AG04449 (cell line): ENCODE measurements at regions of chr3 and their contacts with region 1.

Region 1: DNA sequence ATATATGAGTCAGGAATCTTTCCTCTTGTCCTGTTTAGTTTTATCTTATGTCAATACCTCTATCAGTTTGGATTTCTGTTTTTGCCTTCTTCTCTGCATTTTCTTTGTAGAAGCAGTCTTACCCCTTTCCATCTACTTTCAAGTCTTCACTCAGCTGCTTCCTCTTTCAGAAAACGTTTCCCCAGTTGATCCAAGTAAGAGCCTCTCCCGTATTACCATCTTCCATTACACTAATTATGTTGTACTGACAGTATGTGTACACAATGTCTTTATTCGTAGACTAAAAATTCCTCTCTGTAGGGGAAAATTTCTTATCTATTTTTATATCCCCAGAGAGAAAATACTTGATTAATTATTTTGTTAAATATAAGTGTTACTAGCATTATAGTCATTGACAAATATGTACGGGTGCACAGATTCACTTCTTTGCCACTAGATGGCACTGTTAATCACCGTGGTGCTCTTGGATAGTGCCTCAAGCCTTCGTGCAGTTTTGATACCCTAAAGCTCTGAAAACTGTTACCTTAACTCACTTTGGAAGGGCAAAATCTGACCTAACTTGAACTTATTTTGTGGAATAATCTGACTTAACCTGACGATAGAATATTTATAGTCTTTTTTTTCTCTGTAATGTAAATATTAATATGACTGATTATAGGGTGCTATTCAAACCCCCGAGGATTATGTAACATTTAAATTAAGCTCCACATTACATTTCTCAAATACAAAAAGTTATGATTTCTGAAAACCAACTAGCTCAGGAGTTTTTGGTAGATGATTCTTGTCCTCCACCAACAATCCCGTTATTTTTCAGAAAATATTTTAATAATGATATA is 74.2 kb upstream of the POU1F1 start:
- DNase-seq: no peak
- H3K4me3 ChIP-seq: no peak overlapping the region
- CTCF ChIP-seq: peak; percentile 71

Region 2: DNA sequence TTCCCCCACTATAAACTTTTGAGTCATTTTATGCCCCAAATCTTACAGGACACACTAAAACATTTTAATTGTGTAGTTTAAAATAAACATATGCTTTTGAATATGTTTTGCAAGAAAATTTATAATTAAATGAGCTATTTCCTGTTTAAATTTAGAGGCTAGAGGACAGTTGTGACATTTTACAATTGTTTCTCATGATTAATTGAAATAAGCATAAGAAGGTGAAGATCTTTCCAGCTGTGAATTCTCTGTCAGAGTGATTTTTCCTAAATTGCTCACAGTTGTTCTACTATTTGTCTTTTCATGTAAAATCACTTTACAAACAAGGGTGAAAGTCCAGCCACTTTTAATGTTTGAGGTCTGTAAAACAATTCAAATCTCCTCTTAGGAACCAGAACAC is 1499.5 kb before region 1 on chr3:
- CTCF ChIA-PET with region 1: no interaction called
- POLR2A ChIA-PET with region 1: no interaction called
- DNase-seq: no peak
- H3K4me3 ChIP-seq: no peak overlapping the region
- CTCF ChIP-seq: no peak

Region 3: GRCh38 chr3:87318617-87319021 is 32.0 kb before region 1 on chr3:
- CTCF ChIA-PET with region 1: interaction called, 11 read pairs
- POLR2A ChIA-PET with region 1: no interaction called
- DNase-seq: no peak
- H3K4me3 ChIP-seq: no peak overlapping the region
- CTCF ChIP-seq: no peak

Region 4: GRCh38 chr3:87367664-87368063 is 17.1 kb after region 1 on chr3:
- CTCF ChIA-PET with region 1: interaction called, 24 read pairs
- POLR2A ChIA-PET with region 1: no interaction called
- DNase-seq: no peak
- H3K4me3 ChIP-seq: no peak overlapping the region
- CTCF ChIP-seq: no peak

Region 5: GRCh38 chr3:87503900-87504508 is 153.4 kb after region 1 on chr3:
- CTCF ChIA-PET with region 1: interaction called, 257 read pairs
- POLR2A ChIA-PET with region 1: no interaction called
- DNase-seq: peak; percentile 50
- H3K4me3 ChIP-seq: no peak overlapping the region
- CTCF ChIP-seq: peak; percentile 59